ENCODE measurements at regions of chr5 and their contacts with region 1.

Region 1: GRCh38 chr5:179678223-179679013 is 2.4 kb downstream of the CBY3 start:
- DNase-seq: peak; percentile 96
- ATAC-seq: peak; percentile 92
- H3K4me3 Mint-ChIP-seq: peak overlapping the region; percentile 100
- H3K27ac Mint-ChIP-seq: peak overlapping the region; percentile 99
- H3K4me1 Mint-ChIP-seq: peaks cover 37% of the 10 kb centered on the region
- H3K27me3 Mint-ChIP-seq: no peaks in the 10 kb centered on the region

Region 2: DNA sequence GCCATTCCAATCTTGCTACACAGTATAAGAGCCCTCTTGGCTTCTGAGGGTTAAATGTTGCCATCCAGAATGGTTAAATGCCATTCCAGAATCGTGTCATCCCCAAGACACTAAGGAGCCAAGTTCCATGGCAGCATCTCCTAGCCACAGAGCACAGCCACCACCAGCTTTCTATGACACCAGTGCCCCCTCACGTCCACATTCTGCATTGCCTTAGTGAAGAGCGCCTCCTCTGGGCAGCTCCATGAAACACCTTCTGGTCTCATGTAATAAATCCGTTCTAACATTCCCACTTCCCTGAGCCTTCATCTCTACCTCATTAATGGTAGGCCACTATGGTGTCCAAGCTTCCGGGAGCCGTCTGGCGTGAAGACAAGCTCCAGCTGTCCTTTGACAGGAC is 10.0 kb before region 1 on chr5:
- CTCF ChIA-PET with region 1: interaction called, 21 read pairs
- DNase-seq: peak; percentile 49
- ATAC-seq: peak; percentile 60
- H3K4me3 Mint-ChIP-seq: no peak overlapping the region
- H3K27ac Mint-ChIP-seq: no peak overlapping the region
- H3K4me1 Mint-ChIP-seq: peaks cover 5% of the 10 kb centered on the region
- H3K27me3 Mint-ChIP-seq: no peaks in the 10 kb centered on the region

Region 3: GRCh38 chr5:179696603-179697002 is 18.2 kb after region 1 on chr5:
- CTCF ChIA-PET with region 1: interaction called, 20 read pairs
- DNase-seq: no peak
- ATAC-seq: no peak
- H3K4me3 Mint-ChIP-seq: no peak overlapping the region
- H3K27ac Mint-ChIP-seq: peak overlapping the region; percentile 53
- H3K4me1 Mint-ChIP-seq: peaks cover 28% of the 10 kb centered on the region
- H3K27me3 Mint-ChIP-seq: no peaks in the 10 kb centered on the region

Measured in activated CD8-positive, alpha-beta memory T cell treated with anti-CD3 and anti-CD28 coated beads, Interleukin-2, amount 10 ng/mL, durations not matched to agents 7 days and 5 days (primary cell).